Cardiac septum (tissue), 1 donor: ENCODE measurements at regions of chr7 and their contacts with region 1.

Region 1: GRCh38 chr7:90629297-90629918 is 33.3 kb downstream of the CDK14 start:
- DNase-seq: no peak

Region 2: DNA sequence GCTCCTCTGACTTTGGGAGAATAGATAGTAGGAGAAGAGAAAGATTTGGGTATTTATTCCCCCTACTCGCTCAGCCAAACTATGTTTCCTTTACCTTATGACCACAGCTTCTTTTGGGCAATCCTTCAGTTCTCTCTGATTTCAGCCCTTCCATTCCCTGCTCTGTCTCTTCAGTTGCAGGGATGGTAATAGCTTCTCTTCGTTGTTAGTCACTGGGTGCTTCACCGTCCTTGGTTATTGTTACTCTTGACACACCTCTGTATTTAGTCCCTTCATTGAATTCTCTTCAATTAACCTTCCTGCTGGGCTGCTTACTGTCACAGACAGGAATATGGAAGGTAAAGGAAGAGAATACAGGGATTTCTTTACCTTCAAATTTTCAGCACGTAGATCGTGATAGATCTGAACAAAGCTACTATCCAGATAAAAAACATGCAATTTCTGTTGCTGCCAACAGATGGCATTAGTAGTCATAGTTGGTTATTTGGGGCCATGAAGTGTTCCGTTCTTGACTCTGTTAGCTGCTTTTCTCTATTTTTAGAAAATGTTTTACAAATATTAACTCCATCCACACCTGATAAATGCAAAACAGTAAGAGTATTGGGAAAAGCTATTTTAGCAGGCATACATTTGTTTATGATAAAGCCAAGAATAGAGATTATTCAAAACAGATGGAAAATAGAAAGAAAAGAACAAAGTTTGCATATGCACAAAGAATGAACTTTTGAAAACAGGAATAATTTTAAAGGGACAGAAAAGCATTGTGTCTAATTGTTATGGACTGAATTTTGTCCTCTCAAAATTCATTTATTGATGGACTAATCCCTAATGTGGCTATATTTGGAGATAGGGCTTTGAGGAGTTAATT is 174.0 kb before region 1 on chr7:
- intact Hi-C with region 1: loop called (anchors 5 kb)
- DNase-seq: no peak

Region 3: DNA sequence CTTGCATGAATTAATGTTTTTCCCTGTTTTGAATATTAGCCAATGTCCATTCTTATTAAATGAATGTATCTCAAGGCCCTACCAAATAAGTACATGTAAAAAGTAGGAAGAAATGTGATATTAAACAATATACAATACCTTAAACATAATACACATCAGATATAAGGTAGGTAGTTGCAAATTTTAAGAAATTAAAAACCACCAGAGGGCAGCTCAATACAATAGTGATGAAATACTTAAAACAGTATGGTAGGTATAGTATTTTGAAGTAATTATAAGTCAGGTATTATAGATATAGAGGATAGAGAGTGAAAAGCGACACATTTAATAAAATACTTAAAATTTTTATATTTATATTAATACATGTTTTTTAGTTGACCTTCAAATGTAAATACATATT is 76.9 kb before region 1 on chr7:
- intact Hi-C with region 1: loop called (anchors 2 kb)
- DNase-seq: no peak

Region 4: GRCh38 chr7:90595801-90596671 is 33.4 kb before region 1 on chr7 and contains the start of gene CDK14:
- intact Hi-C with region 1: loop called (anchors 2 kb)
- DNase-seq: peak; percentile 94
- total RNA-seq, gene CDK14: 25.7 TPM